Head of caudate nucleus (tissue), 42 donors: ENCODE measurements at regions of chr11 and their contacts with region 1.

Region 1: DNA sequence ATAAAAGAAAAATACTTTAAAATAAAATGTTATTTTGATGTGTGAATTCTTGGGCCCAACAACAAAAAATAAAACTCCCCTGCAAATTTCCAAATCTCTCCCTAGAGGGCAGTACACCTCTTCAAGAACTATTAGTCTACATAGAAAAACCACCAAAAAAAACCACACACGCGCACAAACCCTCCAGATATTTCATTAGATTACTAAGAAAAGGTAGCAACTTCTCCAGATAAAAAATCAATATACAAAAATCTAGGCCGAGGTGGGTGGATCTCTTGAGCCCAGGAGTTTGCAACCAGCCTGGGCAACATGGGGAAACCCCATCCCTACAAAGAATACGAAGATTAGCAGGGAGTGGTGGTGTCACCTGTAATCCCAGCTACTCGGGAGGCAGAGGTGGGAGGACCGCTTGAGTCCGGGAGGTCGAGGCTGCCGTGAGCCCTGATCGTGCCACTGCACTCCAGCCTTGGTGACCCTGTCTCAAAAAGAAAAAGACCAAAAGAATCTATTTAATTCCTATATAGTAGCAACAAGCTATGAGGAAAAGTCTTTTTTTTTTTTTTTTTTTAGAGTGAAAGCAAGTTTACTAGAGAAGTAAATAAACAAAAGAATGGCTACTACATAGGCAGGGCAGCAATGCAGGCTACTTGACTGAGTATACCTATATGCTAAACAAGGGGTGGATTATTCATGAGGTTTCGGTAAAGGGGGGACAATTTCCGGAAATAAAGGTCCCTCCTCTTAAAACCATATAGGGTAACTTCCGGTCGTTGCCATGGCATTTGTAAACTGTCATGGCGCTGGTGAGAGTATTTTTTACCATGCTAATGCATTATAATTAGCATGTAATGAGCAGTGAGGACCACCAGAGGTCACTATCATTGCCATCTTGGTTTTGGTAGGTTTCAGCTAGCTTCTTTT is 13.1 kb downstream of the B3GNT6 start:
- DNase-seq: peak in 41 of 42 donors; percentile 28 to 93 (median 78)

Region 2: DNA sequence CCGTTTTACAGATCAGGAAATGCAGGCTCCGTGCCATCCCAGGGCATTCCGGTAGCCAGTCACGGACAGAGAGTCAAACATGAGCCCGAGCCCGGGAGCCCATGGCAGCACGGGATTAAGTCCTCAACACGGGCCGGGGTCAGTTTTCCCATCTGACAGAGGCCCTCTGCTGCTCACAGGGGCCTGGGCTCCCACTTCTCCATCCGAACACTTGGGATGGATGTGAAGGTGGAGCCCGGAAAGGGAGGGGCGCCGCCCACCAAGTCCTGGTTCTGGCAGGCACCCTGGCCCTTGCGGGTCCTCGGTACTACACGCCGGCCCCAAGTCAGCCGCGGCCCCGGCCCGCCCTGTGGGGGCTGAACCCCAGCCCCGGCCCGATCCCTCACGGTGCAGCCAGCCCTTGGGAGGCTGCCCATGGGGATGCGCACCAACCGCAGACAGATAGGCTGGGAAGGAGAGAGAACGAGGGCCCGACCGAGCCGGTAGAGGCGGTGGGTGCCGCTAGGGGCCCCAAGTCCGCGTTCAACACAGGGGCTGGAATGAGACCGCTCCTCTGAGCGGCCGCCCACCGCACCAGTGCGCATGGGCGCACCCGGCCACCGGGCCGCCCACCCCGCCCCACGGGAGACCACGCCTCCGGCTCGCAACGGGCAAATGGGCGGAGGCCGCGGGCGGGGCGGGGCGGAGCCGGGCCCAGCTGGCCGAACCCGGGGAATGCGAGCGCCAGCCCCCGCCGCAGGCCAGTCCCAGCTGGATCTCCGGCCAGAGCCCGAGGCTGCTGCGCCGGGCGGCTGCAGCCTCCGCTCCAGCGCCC is 19.2 kb after region 1 on chr11 and contains the start of gene CAPN5:
- intact Hi-C with region 1: loop called (anchors 2 kb)
- DNase-seq: peak; percentile 71 to 97 (median 94)

Region 3: GRCh38 chr11:77091146-77091940 is 44.1 kb after region 1 on chr11:
- intact Hi-C with region 1: loop called (anchors 2 kb)
- DNase-seq: peak; percentile 68 to 93 (median 86)